A549 (cell line): ENCODE measurements at regions of chr3 and their contacts with region 1.

Region 1: DNA sequence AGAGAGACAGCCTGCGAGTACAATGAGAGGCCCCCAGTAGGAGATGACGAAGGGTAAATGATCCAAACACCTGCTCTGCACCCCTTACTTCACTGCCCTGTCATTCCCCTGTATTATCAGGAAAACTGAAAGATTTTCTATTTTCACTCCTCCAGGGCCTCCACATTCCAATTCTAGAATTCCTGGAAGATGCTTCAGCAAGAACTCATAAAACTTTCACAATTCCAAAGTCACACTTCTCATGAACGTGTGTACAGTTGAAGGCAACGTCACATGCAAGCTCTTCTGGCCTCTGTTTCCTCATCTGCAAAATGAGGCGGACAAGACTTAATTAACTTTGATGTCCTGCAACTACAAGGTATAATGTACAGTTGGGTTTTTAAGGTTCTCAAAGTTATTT is 62.8 kb upstream of the SPATA12 start:
- DNase-seq: no peak
- ATAC-seq: no peak
- H3K4me3 ChIP-seq: no peak overlapping the region
- H3K27ac ChIP-seq: peak overlapping the region in 1 of 2 experiments; percentile 37; a peak in 1 of 6 replicates
- H3K4me1 ChIP-seq: peaks cover 14% of the 10 kb centered on the region; the same call in 2 of the 3 replicates
- CTCF ChIP-seq: no peak
- EP300 ChIP-seq: no peak
- POLR2A ChIP-seq: no peak
- RAD21 ChIP-seq: no peak

Region 2: GRCh38 chr3:56939834-56940233 is 57.8 kb before region 1 on chr3:
- CTCF ChIA-PET with region 1: no interaction called
- POLR2A ChIA-PET with region 1: no interaction called
- DNase-seq: no peak
- ATAC-seq: no peak
- H3K4me3 ChIP-seq: no peak overlapping the region
- H3K27ac ChIP-seq: no peak overlapping the region
- H3K4me1 ChIP-seq: no peaks in the 10 kb centered on the region
- CTCF ChIP-seq: no peak
- EP300 ChIP-seq: no peak
- POLR2A ChIP-seq: no peak
- RAD21 ChIP-seq: no peak

Region 3: GRCh38 chr3:57007513-57008460 is 10.1 kb after region 1 on chr3:
- CTCF ChIA-PET with region 1: interaction called, 44 read pairs
- POLR2A ChIA-PET with region 1: no interaction called
- DNase-seq: peak in 1 of 2 experiments; percentile 21
- ATAC-seq: peak; percentile 80 to 90; a peak in 5 of 6 replicates
- H3K4me3 ChIP-seq: no peak overlapping the region
- H3K27ac ChIP-seq: peak overlapping the region; percentile 39 to 83; a peak in 5 of 6 replicates
- H3K4me1 ChIP-seq: peaks cover 21% of the 10 kb centered on the region
- CTCF ChIP-seq: no peak
- EP300 ChIP-seq: no peak
- POLR2A ChIP-seq: no peak
- RAD21 ChIP-seq: 0 out of 5 replicates have a peak, but pooled peaks of 1 of the 2 experiments have one; percentile 10

Region 4: DNA sequence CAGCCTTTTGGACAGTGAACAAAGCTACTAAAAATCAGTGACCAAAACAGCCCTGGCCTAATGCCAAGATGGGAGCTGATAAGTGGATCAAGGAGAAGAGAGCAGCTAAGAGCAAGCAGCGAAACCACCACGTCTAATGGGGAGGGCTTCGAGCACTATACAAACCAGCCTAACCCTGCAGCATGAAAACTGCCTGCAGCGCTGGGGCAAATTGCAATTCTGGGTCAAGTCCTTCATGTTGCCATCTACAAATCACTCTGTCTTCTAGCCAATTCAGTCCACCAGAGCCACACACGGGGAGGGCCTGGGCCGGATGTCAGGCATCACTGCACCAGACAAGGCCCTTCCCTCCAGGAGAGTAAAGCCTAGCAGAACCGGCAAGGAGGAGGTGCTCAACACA is 32.2 kb after region 1 on chr3:
- CTCF ChIA-PET with region 1: no interaction called
- POLR2A ChIA-PET with region 1: no interaction called
- DNase-seq: no peak
- ATAC-seq: no peak
- H3K4me3 ChIP-seq: no peak overlapping the region
- H3K27ac ChIP-seq: no peak overlapping the region
- H3K4me1 ChIP-seq: no peaks in the 10 kb centered on the region
- CTCF ChIP-seq: no peak
- EP300 ChIP-seq: no peak
- POLR2A ChIP-seq: no peak
- RAD21 ChIP-seq: no peak

Region 5: GRCh38 chr3:57068437-57069089 is 70.9 kb after region 1 on chr3:
- CTCF ChIA-PET with region 1: interaction called, 24 read pairs
- POLR2A ChIA-PET with region 1: interaction called, 5 read pairs
- DNase-seq: peak; percentile 55 to 68
- ATAC-seq: peak; percentile 92 to 98
- H3K4me3 ChIP-seq: no peak overlapping the region
- H3K27ac ChIP-seq: peak overlapping the region; percentile 68 to 87
- H3K4me1 ChIP-seq: peaks cover 30% of the 10 kb centered on the region; the same call in 2 of the 3 replicates
- CTCF ChIP-seq: no peak
- EP300 ChIP-seq: no peak
- POLR2A ChIP-seq: no peak
- RAD21 ChIP-seq: no peak

Region 6: GRCh38 chr3:57094575-57094974 is 96.9 kb after region 1 on chr3:
- CTCF ChIA-PET with region 1: interaction called, 16 read pairs
- POLR2A ChIA-PET with region 1: no interaction called
- DNase-seq: no peak
- ATAC-seq: no peak
- H3K4me3 ChIP-seq: no peak overlapping the region
- H3K27ac ChIP-seq: no peak overlapping the region
- H3K4me1 ChIP-seq: no peaks in the 10 kb centered on the region
- CTCF ChIP-seq: no peak
- EP300 ChIP-seq: no peak
- POLR2A ChIP-seq: no peak
- RAD21 ChIP-seq: no peak

Region 7: GRCh38 chr3:57221883-57222282 is 224.2 kb after region 1 on chr3:
- CTCF ChIA-PET with region 1: interaction called, 19 read pairs
- POLR2A ChIA-PET with region 1: no interaction called
- DNase-seq: peak in 1 of 2 experiments; percentile 20
- ATAC-seq: peak in 1 of 2 experiments; percentile 67; a peak in 3 of 6 replicates
- H3K4me3 ChIP-seq: no peak overlapping the region
- H3K27ac ChIP-seq: no peak overlapping the region
- H3K4me1 ChIP-seq: peaks cover 8% of the 10 kb centered on the region; the same call in 1 of the 3 replicates
- CTCF ChIP-seq: peak; percentile 47
- EP300 ChIP-seq: no peak
- POLR2A ChIP-seq: no peak
- RAD21 ChIP-seq: peak; percentile 53 to 65